ENCODE measurements at regions of chr14 and their contacts with region 1.

Region 1: GRCh38 chr14:77554816-77555599 is 56.4 kb upstream of the ISM2 start:
- DNase-seq: no peak
- H3K4me3 ChIP-seq: no peak overlapping the region
- H3K27ac ChIP-seq: no peak overlapping the region
- H3K4me1 ChIP-seq: no peaks in the 10 kb centered on the region
- H3K27me3 ChIP-seq: no peaks in the 10 kb centered on the region
- CTCF ChIP-seq: no peak

Region 2: GRCh38 chr14:77457522-77458290 is 97.3 kb before region 1 on chr14 and contains the starts of genes AHSA1 and VIPAS39:
- intact Hi-C with region 1: loop called (anchors 5 kb)
- DNase-seq: peak; percentile 97 to 98
- H3K4me3 ChIP-seq: peak within 1 kb of the TSS; percentile 89
- H3K27ac ChIP-seq: peak within 1 kb of the TSS; percentile 92 to 94
- H3K4me1 ChIP-seq: peaks cover 0 to 31% (median 21%) of the 10 kb centered on the region in 4 donors
- H3K27me3 ChIP-seq: no peaks in the 10 kb centered on the region
- CTCF ChIP-seq: no peak

Region 3: DNA sequence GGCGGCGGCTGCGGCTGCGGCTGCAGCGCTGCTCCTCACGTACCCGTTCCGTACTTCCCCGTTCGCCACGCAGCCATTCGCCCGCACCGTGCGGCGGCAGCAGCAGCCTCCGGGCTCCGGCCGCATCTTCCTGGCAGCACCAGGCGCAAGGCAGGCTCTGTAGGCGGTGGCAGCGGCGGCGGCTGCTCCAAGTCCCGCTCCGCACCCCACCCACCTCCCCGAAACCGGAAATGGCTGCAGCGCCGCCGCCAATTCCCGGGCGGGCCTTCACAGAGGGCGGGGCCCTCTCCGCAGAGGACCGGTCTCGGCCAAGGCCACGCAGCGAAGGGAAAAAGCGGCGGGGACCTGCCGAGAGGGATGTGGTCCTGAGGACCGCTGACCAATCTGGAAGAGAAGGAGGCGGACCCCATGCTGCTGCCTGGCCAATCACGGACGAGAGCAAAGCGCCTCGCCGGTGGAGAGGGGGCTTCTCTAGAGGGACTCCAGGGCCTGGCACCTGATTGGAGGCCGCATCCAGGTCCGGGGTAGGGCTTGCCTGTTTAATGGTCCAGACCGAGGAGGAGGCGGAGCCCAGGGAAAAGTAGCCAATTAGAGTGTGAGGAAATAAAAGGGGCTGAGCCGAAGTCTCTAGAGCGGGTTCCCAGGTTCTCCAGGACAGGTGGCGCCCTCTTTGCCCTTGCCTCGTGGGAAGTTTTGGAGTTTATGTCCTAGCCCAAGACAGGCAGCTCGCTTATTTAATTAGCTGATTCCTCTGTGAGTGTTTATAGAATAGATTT is 61.6 kb after region 1 on chr14 and contains the start of gene SPTLC2:
- intact Hi-C with region 1: no loop called
- DNase-seq: peak; percentile 98 to 100
- H3K4me3 ChIP-seq: peak within 1 kb of the TSS; percentile 73 to 100
- H3K27ac ChIP-seq: peak within 1 kb of the TSS; percentile 74 to 80
- H3K4me1 ChIP-seq: peaks cover 0 to 14% (median 7%) of the 10 kb centered on the region in 4 donors
- H3K27me3 ChIP-seq: no peaks in the 10 kb centered on the region
- CTCF ChIP-seq: peak in 1 of 2 experiments; percentile 18

Measured in tibial artery (tissue), 4 donors.